ENCODE measurements at regions of chr1 and their contacts with region 1.

Region 1: GRCh38 chr1:25198663-25199252 is 33.5 kb downstream of the SYF2 start:
- DNase-seq: peak in 1 of 2 donors; percentile 72
- H3K4me3 ChIP-seq: peak overlapping the region in 1 of 2 donors; percentile 57
- H3K27ac ChIP-seq: peak overlapping the region; percentile 65 to 66
- H3K4me1 ChIP-seq: peaks cover 5% of the 10 kb centered on the region in 2 donors
- H3K27me3 ChIP-seq: no peaks in the 10 kb centered on the region
- CTCF ChIP-seq: peak in 2 of 3 experiments; percentile 20 to 33

Region 2: DNA sequence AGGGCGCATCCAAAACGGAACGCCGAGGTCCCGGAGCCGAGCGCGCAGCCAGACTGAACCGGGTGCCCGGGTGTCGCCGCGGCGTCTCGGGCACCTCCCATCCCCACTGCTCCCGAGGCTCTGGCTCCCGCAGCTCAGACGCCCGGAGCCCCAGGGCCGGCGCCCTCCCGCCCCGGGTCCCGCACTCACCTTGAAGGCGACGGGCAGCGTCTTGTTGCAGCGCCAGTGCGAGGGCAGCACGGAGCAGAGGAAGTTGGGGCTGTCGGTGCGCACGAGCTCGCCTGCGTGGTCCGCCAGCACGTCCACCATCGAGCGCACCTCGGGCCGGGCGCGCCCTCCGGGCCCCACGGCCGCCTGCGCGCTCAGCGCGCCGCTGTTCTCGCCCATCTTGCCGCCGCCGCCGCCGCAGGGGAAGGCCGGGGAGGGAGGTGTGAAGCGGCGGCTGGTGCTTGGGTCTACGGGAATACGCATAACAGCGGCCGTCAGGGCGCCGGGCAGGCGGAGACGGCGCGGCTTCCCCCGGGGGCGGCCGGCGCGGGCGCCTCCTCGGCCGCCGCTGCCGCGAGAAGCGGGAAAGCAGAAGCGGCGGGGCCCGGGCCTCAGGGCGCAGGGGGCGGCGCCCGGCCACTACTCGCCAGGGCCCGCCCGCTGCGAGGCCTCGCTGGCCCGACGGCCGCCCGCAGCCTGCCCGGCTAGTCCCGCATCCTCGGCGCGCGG is 269.2 kb before region 1 on chr1:
- intact Hi-C with region 1: loop called (anchors 10 kb)
- DNase-seq: no peak
- H3K4me3 ChIP-seq: peak overlapping the region; percentile 36 to 60
- H3K27ac ChIP-seq: peak overlapping the region; percentile 9 to 57
- H3K4me1 ChIP-seq: peaks cover 0 to 13% of the 10 kb centered on the region in 2 donors
- H3K27me3 ChIP-seq: peaks cover 3% of the 10 kb centered on the region
- CTCF ChIP-seq: no peak